Mammary epithelial cell (primary cell): ENCODE measurements at regions of chr2 and their contacts with region 1.

Region 1: DNA sequence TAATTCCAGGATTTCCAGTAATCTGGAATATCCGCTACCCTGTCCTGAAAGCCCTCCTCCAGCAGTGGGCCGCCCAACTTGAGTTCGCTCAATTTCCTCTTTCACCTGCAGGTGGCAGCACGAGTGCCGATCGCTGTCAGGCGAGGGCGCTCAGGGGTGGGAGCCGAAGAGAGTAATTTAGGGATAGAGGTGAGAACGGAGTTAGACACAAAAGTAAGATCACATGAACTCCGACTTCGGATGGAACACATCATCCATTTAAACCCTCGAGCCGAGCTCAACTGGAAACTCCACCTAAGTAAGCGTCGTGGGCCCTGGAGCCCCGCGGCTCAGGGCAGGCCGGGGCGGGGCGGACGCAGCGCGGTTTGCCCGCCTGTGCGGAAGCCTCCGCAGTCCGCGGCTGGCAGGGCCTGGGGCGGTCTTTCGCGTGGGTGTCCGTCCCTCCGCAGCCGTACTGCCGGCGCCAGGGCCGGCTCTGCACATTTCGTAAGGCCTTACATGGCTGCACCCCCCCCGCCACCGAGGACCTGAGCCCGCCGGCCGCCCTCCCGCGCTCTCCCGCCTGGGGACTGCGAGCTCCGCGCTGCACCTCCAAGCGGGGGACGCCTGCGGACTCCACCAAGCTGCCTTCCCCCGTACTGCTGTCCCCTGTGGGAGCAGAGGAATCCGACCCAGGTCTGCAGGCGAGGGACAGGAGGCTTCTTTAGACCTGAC is 61.2 kb downstream of the SEMA4F start:
- DNase-seq: peak; percentile 78
- H3K4me3 ChIP-seq: peak overlapping the region; percentile 46 to 67 (median 50)
- H3K27ac ChIP-seq: peak overlapping the region; percentile 60
- H3K4me1 ChIP-seq: peaks cover 40% of the 10 kb centered on the region
- H3K27me3 ChIP-seq: no peaks in the 10 kb centered on the region
- CTCF ChIP-seq: peak; percentile 90 to 91

Region 2: DNA sequence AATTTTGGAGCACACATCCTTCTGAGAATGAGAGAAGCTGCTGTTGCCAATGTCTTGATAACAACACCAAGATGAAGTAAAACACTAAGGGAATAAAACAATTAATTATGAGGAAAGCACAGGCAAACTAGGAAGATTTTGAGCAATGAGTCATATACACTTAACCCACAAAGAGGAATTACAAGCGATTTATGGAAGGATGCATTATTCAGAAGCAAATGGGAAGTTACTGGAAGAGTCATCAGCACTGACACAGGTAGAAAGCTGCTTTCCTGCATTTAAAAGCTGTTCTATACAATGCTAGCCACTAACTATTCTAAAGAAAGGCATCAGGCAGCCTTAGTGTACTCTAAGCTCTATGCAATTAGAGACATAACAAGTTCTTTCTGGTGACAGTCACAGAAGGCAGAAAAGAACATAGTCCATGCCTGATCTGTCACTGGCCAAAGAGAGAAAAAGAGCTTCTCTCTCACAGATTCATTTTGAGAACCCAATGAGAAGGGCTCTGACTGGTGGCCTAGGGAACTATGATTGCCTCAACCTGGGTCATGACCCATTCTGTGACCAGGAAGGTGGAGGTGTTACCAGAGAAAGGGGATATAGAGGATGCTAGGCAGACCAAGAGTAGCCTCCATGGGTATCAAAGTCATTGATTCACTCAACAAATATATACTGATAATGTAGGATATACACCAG is 112.5 kb before region 1 on chr2:
- CTCF ChIA-PET with region 1: no interaction called
- dilution Hi-C with region 1: no loop called
- in situ Hi-C with region 1: no loop called
- intact Hi-C with region 1: no loop called
- DNase-seq: peak; percentile 79
- H3K4me3 ChIP-seq: no peak overlapping the region
- H3K27ac ChIP-seq: no peak overlapping the region
- H3K4me1 ChIP-seq: peaks cover 8% of the 10 kb centered on the region
- H3K27me3 ChIP-seq: no peaks in the 10 kb centered on the region
- CTCF ChIP-seq: no peak

Region 3: DNA sequence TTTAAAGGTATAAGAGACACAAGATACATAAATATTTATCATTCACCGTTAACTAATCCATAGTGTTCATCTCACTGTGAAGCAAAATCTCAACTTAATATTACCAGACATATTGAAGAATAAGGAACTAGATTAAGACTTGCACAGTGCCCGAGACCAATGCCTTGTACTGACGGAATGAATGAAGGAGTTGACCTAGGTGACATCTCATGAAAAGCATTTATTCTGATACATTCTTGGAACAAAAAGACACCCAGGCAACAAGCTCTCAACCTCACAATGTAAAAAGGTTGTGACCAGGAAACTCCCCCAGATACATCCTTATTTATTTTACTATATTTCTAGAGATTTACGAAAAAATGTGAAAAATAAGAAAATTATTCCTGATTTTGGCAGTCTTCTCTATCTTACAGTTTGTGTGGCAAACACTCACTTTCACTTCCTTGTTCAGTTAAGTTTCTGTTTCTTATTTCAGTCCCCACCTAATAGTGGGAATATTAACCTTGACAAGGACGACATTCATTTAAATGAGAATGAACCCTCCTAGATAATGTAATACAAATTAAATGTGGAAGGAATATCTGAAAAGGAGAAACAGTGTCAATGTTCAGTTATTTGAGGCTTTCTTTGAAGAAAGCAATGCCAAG is 95.5 kb before region 1 on chr2:
- CTCF ChIA-PET with region 1: no interaction called
- dilution Hi-C with region 1: no loop called
- in situ Hi-C with region 1: no loop called
- intact Hi-C with region 1: no loop called
- DNase-seq: no peak
- H3K4me3 ChIP-seq: no peak overlapping the region
- H3K27ac ChIP-seq: no peak overlapping the region
- H3K4me1 ChIP-seq: no peaks in the 10 kb centered on the region
- H3K27me3 ChIP-seq: peaks cover 4% of the 10 kb centered on the region
- CTCF ChIP-seq: no peak

Region 4: DNA sequence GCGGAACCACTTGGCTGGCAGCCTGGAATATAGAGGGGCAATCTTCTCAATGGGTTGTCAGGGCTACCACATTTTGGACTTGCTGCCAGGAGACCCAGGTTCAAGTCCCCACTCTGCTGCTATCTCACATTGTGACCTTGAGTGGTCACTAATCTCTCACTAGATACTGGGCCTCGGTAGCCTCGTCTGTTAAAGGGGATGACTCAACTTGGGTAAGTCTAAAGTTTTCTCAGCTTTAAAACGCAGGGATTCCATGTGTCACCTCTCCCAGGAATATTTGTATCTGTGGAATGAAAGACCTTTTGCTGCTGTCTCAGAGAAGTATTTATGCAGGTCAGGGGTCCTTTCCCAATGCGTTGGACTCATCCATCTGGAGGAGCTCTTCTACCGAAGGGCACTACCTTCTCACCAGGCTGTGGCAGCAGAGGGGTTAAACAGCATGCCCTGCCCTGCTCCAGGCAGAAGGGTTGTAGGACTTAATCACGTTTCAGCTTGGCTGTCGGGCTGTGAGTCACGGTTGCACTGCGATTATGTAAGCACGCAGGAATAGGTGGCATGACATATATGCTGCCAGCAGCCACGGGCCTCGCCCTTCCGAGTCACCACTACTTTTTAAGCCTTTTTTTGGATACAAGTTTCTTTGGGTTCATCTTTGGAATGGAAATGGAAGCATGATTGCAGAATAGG is 25.3 kb after region 1 on chr2:
- CTCF ChIA-PET with region 1: no interaction called
- dilution Hi-C with region 1: no loop called
- in situ Hi-C with region 1: no loop called
- intact Hi-C with region 1: loop called (anchors 1 kb)
- DNase-seq: peak; percentile 98
- H3K4me3 ChIP-seq: no peak overlapping the region
- H3K27ac ChIP-seq: peak overlapping the region; percentile 90
- H3K4me1 ChIP-seq: peaks cover 31% of the 10 kb centered on the region
- H3K27me3 ChIP-seq: no peaks in the 10 kb centered on the region
- CTCF ChIP-seq: peak in 1 of 2 donors; percentile 29

Region 5: DNA sequence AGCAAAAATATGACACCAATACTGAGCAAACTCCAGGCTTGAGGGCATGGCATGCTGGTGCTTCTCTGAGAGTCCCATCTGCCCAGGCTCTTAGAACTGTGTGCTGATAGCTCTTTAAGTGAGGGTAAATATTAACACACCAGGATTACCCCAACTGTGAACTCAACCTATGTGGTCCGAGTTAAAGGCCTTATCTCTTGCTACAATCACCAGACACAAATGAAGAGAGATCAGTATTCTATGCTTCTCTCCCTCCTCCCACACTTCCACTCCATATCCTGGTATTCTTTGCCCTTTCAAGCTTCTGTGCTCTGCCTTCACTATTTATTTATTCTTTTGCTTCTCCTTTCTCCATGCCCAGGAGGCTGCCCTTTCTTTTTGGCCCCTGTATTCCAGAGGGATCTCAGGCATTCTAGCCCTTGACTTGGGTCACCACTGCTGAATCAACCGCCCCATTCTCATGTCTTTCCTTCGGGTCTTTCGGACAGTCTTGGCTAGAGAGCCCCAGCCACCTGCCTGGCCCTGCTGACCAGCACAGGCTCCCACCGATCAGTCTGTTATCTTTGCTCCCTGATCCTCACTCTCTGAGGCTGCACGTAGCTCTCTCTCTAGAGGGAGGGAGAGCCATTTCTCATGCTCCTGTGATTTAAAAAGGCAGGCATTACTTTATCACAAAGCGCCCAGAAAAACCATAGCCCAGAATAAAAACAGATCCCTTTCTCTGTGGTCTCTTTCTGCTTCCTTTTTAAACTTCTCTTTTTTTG is 101.5 kb after region 1 on chr2:
- CTCF ChIA-PET with region 1: no interaction called
- dilution Hi-C with region 1: no loop called
- in situ Hi-C with region 1: no loop called
- intact Hi-C with region 1: no loop called
- DNase-seq: no peak
- H3K4me3 ChIP-seq: no peak overlapping the region
- H3K27ac ChIP-seq: no peak overlapping the region
- H3K4me1 ChIP-seq: no peaks in the 10 kb centered on the region
- H3K27me3 ChIP-seq: no peaks in the 10 kb centered on the region
- CTCF ChIP-seq: no peak

Region 6: GRCh38 chr2:74845217-74846011 is 130.2 kb after region 1 on chr2:
- CTCF ChIA-PET with region 1: no interaction called
- dilution Hi-C with region 1: no loop called
- in situ Hi-C with region 1: loop called (anchors 10 kb)
- intact Hi-C with region 1: no loop called
- DNase-seq: peak; percentile 97
- H3K4me3 ChIP-seq: peak overlapping the region in 1 of 3 experiments; percentile 14
- H3K27ac ChIP-seq: peak overlapping the region; percentile 89
- H3K4me1 ChIP-seq: peaks cover 78% of the 10 kb centered on the region
- H3K27me3 ChIP-seq: no peaks in the 10 kb centered on the region
- CTCF ChIP-seq: no peak

Region 7: GRCh38 chr2:74876081-74876886 is 161.0 kb after region 1 on chr2:
- CTCF ChIA-PET with region 1: no interaction called
- dilution Hi-C with region 1: no loop called
- in situ Hi-C with region 1: no loop called
- intact Hi-C with region 1: loop called (anchors 1 kb)
- DNase-seq: no peak
- H3K4me3 ChIP-seq: no peak overlapping the region
- H3K27ac ChIP-seq: no peak overlapping the region
- H3K4me1 ChIP-seq: no peaks in the 10 kb centered on the region
- H3K27me3 ChIP-seq: no peaks in the 10 kb centered on the region
- CTCF ChIP-seq: peak; percentile 21 to 48

Region 8: GRCh38 chr2:74982577-74982976 is 267.3 kb after region 1 on chr2:
- CTCF ChIA-PET with region 1: no interaction called
- dilution Hi-C with region 1: no loop called
- in situ Hi-C with region 1: no loop called
- intact Hi-C with region 1: loop called (anchors 2 kb)
- DNase-seq: peak; percentile 12
- H3K4me3 ChIP-seq: no peak overlapping the region
- H3K27ac ChIP-seq: no peak overlapping the region
- H3K4me1 ChIP-seq: no peaks in the 10 kb centered on the region
- H3K27me3 ChIP-seq: no peaks in the 10 kb centered on the region
- CTCF ChIP-seq: peak; percentile 30 to 55